ENCODE measurements at regions of chr14 and their contacts with region 1.

Region 1: GRCh38 chr14:91323671-91324605 is 79.4 kb upstream of the GPR68 start:
- DNase-seq: peak; percentile 85 to 87
- H3K4me3 ChIP-seq: peak overlapping the region; percentile 26 to 41
- H3K27ac ChIP-seq: peak overlapping the region in 1 of 2 donors; percentile 26
- H3K4me1 ChIP-seq: peaks cover 0 to 10% (median 0%) of the 10 kb centered on the region in 4 donors
- H3K27me3 ChIP-seq: no peaks in the 10 kb centered on the region
- CTCF ChIP-seq: peak; percentile 87 to 96

Region 2: DNA sequence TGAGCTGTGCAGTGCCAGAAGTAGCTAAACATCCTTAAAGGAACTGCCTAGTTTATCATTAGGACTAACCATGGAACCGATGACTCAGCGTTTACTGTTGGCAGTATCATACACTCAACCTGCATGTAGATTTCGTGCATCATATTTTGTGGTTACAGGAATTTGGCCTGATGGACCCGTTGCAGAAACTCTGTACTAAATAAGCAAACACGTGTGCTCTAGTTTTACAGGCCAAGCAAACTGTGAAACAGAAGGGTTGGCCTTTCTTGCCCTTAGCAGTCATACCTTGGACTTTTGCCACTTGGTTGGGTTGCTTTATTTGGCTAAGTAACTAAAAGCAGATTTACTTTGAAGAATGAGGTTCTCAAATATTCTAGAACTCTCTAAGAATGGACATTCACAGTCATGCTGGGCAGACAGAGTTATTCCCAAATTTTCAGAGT is 174.4 kb before region 1 on chr14:
- intact Hi-C with region 1: no loop called
- DNase-seq: peak; percentile 75 to 79
- H3K4me3 ChIP-seq: no peak overlapping the region
- H3K27ac ChIP-seq: peak overlapping the region in 1 of 2 donors; percentile 28
- H3K4me1 ChIP-seq: peaks cover 0 to 21% (median 15%) of the 10 kb centered on the region in 4 donors
- H3K27me3 ChIP-seq: no peaks in the 10 kb centered on the region
- CTCF ChIP-seq: no peak

Region 3: DNA sequence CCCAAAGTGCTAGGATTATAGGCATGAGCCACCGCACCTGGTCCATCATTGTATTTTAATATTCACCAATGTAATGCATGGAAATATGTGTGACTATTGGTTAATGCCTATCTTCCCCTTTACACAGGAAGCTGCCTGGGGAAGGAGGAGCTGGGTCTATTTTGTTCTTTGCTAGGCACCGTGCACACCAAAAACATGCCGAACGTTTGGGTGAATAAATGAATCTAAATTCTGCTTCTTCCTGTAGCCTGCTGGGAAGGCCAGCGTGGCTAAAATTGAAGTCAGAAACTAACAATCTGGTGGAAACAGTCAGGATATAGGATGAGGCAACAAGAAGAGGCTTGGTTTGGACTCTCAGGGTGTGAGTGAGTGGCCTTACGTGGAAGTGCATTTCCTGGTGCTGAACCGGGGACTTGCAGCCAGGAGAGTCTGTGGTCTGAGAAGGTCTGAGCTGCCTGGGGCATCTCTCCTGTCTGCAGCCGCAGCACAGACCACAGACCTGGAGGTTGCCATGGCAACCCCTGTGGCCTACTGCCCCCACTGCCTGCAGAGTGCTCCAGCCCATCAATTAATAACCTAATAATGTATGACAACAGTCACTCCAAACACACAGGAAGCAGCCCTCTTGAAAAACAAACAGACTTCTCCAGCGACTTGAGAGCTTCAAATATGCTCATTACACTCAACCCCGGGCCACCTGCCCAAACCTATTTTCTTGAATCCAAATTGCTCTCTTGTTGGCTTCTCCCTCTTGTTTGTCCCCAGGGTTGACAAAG is 73.9 kb before region 1 on chr14:
- intact Hi-C with region 1: no loop called
- DNase-seq: no peak
- H3K4me3 ChIP-seq: no peak overlapping the region
- H3K27ac ChIP-seq: no peak overlapping the region
- H3K4me1 ChIP-seq: peaks cover 0 to 11% (median 8%) of the 10 kb centered on the region in 4 donors
- H3K27me3 ChIP-seq: peaks cover 0 to 3% of the 10 kb centered on the region in 2 donors
- CTCF ChIP-seq: no peak

Region 4: GRCh38 chr14:91399868-91400640 is 76.1 kb after region 1 on chr14:
- intact Hi-C with region 1: no loop called
- DNase-seq: no peak
- H3K4me3 ChIP-seq: no peak overlapping the region
- H3K27ac ChIP-seq: no peak overlapping the region
- H3K4me1 ChIP-seq: peaks cover 0 to 8% (median 2%) of the 10 kb centered on the region in 4 donors
- H3K27me3 ChIP-seq: peaks cover 0 to 22% of the 10 kb centered on the region in 2 donors
- CTCF ChIP-seq: no peak

Region 5: DNA sequence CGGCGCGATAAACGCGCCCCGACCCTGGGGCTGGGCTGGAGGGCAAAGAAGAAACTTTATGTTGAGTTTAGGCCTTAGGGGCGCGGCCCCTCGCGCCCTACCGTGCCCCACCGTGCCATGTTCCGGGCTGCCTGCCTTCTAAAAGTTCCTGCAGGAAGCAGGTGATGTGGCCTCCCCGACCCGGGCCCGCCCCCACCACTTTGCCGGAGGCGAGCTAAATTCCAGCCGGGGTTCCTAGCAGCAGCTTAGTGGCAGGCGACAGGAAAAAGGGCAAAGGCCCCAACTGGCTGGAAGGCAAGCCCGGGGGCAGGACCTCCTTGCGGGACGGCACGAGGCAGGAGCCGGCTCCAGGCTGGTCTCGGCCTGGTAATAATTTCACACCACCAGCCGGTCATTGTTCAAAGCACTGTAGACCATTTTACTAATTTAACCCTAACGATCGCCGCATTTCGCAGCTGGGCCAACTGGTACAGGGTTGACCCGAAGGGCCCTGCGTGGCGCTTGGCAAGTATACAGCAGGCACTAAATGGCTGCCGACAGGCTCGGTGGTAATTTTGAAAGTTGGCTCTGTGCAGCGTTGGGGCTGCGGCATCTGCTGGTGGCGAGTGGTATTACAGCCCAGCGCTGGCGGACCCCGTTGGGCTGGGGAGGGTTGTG is 94.6 kb after region 1 on chr14:
- intact Hi-C with region 1: loop called (anchors 5 kb)
- DNase-seq: peak in 1 of 2 donors; percentile 47
- H3K4me3 ChIP-seq: peak overlapping the region; percentile 41 to 51
- H3K27ac ChIP-seq: no peak overlapping the region
- H3K4me1 ChIP-seq: peaks cover 0 to 27% (median 19%) of the 10 kb centered on the region in 4 donors
- H3K27me3 ChIP-seq: peaks cover 0 to 25% of the 10 kb centered on the region in 2 donors
- CTCF ChIP-seq: peak; percentile 91 to 92

Measured in tibial artery (tissue), 4 donors.